A549 (cell line): ENCODE measurements at regions of chr2 and their contacts with region 1.

Region 1: DNA sequence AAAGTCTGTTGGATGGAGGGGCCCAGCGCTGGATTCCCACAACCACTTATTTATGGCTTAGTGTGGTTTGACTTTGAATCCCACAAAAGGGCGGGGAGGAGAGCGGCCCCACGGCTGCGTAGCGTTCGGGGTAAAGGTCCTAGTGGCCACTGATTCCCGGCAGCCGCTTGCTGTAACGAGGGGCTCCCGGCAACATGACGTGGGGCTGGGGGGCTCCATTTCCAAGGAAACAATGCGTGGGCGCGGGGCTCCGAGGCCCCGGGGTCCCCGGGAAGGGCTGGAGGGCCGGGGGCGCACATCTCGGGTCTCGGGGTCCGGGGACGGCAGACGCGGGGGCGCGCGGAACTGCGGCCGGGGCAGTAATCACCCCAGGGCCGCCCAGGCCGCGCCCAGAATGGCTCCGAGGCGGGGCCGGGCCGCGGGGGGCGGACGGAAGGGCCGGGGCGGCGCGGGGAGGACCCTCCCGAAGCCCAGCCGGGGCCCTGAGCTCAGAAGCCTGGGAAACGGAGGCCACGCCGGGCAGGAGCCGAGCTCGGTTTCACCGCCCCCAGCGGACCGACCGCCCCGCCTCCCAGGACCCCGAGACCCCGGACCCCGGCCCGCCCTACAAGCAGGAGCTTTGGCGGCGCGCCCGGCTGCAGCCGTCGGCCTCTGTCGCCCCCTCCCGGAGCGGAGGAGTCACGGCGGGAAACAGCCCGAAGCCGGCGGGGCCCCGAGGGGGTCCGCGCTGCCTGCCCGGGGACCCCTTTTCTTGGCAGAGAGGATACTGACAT is 11.9 kb upstream of the MLPH start:
- DNase-seq: peak; percentile 71 to 85
- ATAC-seq: peak; percentile 80 to 89
- H3K4me3 ChIP-seq: peak overlapping the region; percentile 57
- H3K27ac ChIP-seq: peak overlapping the region; percentile 95 to 100
- H3K4me1 ChIP-seq: peaks cover 36% of the 10 kb centered on the region
- CTCF ChIP-seq: peak; percentile 85
- EP300 ChIP-seq: peak in 1 of 2 experiments; percentile 32; a peak in 1 of 5 replicates
- POLR2A ChIP-seq: peak; percentile 35; the same call in 1 of the 2 replicates
- RAD21 ChIP-seq: peak; percentile 43 to 66

Region 2: DNA sequence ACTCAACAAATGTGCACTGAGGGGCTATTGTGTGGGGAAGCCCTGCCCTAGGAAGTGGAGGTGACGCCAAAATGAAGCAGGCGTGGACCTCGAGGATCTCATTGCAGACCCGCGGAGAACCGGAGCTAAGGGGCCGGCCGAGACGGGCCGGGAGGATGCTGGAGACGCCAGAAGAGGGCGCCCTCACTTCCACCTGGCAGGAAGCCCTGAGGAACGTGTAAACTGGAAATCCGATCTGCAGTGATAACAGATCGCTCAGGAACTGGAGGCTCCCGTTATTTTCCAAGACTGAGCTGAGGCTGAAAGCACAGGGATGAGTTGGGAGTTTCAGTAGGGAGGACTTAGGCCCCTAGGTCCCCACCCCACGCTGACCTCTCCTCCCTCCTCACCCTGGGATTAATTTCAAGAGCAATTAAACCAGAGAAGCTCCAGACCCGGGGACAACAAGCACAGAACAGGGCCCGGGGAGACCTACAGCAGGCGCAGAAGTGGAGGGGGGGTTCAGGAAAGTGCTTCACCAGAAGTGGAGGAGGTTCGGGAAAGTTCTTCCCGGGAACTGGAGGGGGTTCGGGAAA is 53.5 kb before region 1 on chr2:
- CTCF ChIA-PET with region 1: interaction called, 38 read pairs
- POLR2A ChIA-PET with region 1: interaction called, 4 read pairs
- DNase-seq: peak; percentile 71 to 85
- ATAC-seq: peak; percentile 92 to 98
- H3K4me3 ChIP-seq: 0 out of 3 replicates have a peak overlapping the region, but pooled peaks have one; percentile 22
- H3K27ac ChIP-seq: peak overlapping the region; percentile 78 to 83
- H3K4me1 ChIP-seq: peaks cover 9% of the 10 kb centered on the region
- CTCF ChIP-seq: peak; percentile 85
- EP300 ChIP-seq: no peak
- POLR2A ChIP-seq: no peak
- RAD21 ChIP-seq: peak; percentile 73 to 75

Region 3: GRCh38 chr2:237500681-237501424 is 25.7 kb after region 1 on chr2:
- CTCF ChIA-PET with region 1: interaction called, 44 read pairs
- POLR2A ChIA-PET with region 1: interaction called, 9 read pairs
- DNase-seq: peak; percentile 96 to 99
- ATAC-seq: peak; percentile 85 to 86
- H3K4me3 ChIP-seq: peak overlapping the region; percentile 21; the same call in 1 of the 3 replicates
- H3K27ac ChIP-seq: peak overlapping the region; percentile 97 to 98
- H3K4me1 ChIP-seq: peaks cover 94% of the 10 kb centered on the region
- CTCF ChIP-seq: no peak
- EP300 ChIP-seq: peak; percentile 99 to 100
- POLR2A ChIP-seq: no peak
- RAD21 ChIP-seq: peak; percentile 16 to 52; a peak in 3 of 5 replicates

Region 4: DNA sequence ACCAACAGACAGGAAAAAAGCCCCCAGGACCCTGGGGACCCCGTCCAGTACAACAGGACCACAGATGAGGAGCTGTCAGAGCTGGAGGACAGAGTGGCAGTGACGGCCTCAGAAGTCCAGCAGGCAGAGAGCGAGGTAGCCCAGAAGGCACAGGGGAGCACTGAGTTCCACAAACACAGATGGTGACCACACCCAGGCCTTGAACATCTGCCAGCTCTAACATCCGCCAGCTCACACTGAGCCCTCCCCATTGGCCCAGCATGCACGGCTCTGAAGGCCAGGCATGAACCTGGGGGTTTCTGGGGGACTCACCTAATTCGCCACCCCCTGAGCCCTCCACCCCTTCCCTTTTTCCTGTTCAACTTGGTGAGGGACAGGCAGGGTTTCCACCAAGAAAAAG is 65.7 kb after region 1 on chr2:
- CTCF ChIA-PET with region 1: interaction called, 23 read pairs
- POLR2A ChIA-PET with region 1: no interaction called
- DNase-seq: peak in 1 of 2 experiments; percentile 42
- ATAC-seq: peak; percentile 10 to 49; a peak in 5 of 6 replicates
- H3K4me3 ChIP-seq: no peak overlapping the region
- H3K27ac ChIP-seq: peak overlapping the region; percentile 50 to 70; a peak in 5 of 6 replicates
- H3K4me1 ChIP-seq: peaks cover 47% of the 10 kb centered on the region
- CTCF ChIP-seq: no peak
- EP300 ChIP-seq: no peak
- POLR2A ChIP-seq: no peak
- RAD21 ChIP-seq: no peak

Region 5: DNA sequence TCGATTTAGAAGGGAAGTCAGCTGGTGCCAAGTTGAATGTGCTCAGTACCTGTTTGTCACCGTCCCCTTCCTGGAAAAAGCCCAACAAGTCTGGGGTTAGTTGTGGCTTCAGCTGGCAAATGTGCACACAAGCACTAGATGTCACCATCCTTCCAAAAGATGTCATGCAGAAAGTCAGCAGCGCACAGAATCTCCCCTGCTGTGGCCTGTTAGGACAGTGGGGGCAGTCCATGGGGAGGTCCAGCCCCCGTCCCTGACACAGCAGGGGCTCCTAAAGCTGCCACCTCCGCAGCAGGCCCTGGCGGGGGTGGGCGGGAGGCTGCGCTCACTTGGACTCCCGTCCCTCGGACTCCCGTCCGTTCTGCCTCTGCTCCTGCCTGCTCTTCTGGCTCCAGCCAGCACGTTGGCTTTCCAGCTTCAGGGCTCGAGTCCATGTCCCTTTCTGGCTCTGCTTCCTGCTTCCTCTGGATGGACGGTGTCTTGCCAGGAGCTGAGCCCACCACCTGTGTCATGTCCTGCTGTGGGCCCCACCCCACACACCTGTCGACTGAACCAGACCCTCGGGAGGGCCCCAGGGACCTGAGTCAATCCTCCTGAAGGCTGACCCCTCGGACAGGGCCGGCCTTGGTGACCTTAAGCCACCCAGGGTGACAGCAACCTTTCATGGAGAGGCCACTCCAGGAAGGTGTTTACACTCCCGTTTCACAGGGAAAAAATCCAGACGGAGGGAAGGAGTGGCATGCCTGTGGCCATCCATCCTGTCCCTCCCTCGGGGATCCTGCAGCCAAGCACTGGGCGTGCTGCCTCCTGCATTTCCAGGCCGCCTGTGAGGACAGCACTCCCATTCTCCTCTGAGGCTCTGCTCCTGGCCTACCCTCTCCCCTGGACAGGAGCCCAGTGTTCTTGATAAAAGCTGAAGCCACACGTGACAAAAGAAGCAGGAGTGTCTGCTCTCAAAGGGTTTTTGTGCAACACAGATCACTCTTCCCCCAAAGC is 106.9 kb after region 1 on chr2:
- CTCF ChIA-PET with region 1: interaction called, 11 read pairs
- POLR2A ChIA-PET with region 1: no interaction called
- DNase-seq: peak in 1 of 2 experiments; percentile 58
- ATAC-seq: peak; percentile 70
- H3K4me3 ChIP-seq: no peak overlapping the region
- H3K27ac ChIP-seq: peak overlapping the region in 1 of 2 experiments; percentile 36; a peak in 3 of 6 replicates
- H3K4me1 ChIP-seq: 0 out of 3 replicates have a peak, but pooled peaks cover 2% of the 10 kb centered on the region
- CTCF ChIP-seq: peak; percentile 41; the same call in 2 of the 3 replicates
- EP300 ChIP-seq: no peak
- POLR2A ChIP-seq: no peak
- RAD21 ChIP-seq: peak; percentile 59 to 61